ENCODE measurements at regions of chr4 and their contacts with region 1.

Region 1: GRCh38 chr4:177339477-177340374 is 30.1 kb downstream of the NEIL3 start:
- DNase-seq: peak; percentile 8
- H3K4me3 ChIP-seq: no peak overlapping the region
- H3K27ac ChIP-seq: no peak overlapping the region
- H3K27me3 ChIP-seq: no peaks in the 10 kb centered on the region
- CTCF ChIP-seq: peak; percentile 81

Region 2: DNA sequence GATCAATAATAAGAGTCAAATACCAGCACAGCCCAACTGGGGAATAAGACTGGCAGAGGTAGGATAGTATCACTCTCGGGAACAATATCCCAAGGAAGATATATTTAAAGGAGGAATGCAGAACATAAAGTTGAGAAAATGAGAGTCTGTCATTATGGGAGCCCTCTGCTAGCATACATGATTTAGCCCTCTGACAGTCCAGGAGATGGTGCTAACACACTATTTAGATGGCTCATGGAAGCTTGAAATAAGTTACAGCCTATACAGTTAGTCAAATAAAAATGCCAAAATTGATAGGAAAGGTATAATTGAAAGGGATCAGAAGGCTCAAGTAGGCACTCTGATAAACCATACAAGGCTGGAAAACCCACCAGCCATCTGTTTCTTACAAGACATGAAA is 231.0 kb before region 1 on chr4:
- CTCF ChIA-PET with region 1: interaction called, 19 read pairs
- POLR2A ChIA-PET with region 1: no interaction called
- DNase-seq: peak; percentile 21
- H3K4me3 ChIP-seq: no peak overlapping the region
- H3K27ac ChIP-seq: no peak overlapping the region
- H3K27me3 ChIP-seq: no peaks in the 10 kb centered on the region
- CTCF ChIP-seq: peak; percentile 71

Region 3: GRCh38 chr4:177309522-177310371 is 30.0 kb before region 1 on chr4 and contains the start of gene NEIL3:
- CTCF ChIA-PET with region 1: interaction called, 13 read pairs
- POLR2A ChIA-PET with region 1: no interaction called
- DNase-seq: peak; percentile 71
- H3K4me3 ChIP-seq: peak within 1 kb of the TSS; percentile 79
- H3K27ac ChIP-seq: no peak within 1 kb of the TSS
- H3K27me3 ChIP-seq: no peaks in the 10 kb centered on the region
- CTCF ChIP-seq: no peak
- polyA plus RNA-seq, gene NEIL3: 2.1 and 3.7 TPM in 2 replicates

Region 4: DNA sequence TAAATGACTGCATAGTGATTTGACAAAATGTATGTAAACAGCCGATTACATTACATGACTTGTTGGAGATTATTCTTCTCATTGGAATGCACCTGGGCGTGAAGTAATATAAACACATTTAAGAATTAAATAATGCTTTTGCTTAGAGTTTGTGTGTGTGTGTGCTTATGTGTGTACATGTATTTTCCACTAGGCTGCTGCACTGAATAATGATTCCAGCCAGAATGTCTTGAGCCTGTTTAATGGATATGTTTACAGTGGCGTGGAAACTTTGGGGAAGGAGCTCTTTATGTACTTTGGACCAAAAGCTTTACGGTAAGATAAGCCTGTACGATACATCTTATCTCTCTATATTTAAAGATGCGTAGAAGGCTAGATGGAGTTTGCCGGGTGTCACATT is 17.5 kb before region 1 on chr4:
- CTCF ChIA-PET with region 1: interaction called, 19 read pairs
- POLR2A ChIA-PET with region 1: interaction called, 4 read pairs
- DNase-seq: no peak
- H3K4me3 ChIP-seq: peak overlapping the region; percentile 23; the same call in 1 of the 2 replicates
- H3K27ac ChIP-seq: no peak overlapping the region
- H3K27me3 ChIP-seq: no peaks in the 10 kb centered on the region
- CTCF ChIP-seq: no peak

Measured in AG04450 (cell line).